Activated CD4-positive, alpha-beta T cell treated with anti-CD3 and anti-CD28 coated beads, Interleukin-2, amount 10 ng/mL, durations not matched to agents 24 days and 14 days (primary cell): ENCODE measurements at regions of chr5 and their contacts with region 1.

Region 1: GRCh38 chr5:174935854-174936474 is 211.6 kb downstream of the MSX2 start:
- DNase-seq: peak; percentile 74
- H3K4me3 Mint-ChIP-seq: no peak overlapping the region
- H3K27ac Mint-ChIP-seq: no peak overlapping the region
- H3K4me1 Mint-ChIP-seq: no peaks in the 10 kb centered on the region
- H3K27me3 Mint-ChIP-seq: peaks cover 8% of the 10 kb centered on the region

Region 2: DNA sequence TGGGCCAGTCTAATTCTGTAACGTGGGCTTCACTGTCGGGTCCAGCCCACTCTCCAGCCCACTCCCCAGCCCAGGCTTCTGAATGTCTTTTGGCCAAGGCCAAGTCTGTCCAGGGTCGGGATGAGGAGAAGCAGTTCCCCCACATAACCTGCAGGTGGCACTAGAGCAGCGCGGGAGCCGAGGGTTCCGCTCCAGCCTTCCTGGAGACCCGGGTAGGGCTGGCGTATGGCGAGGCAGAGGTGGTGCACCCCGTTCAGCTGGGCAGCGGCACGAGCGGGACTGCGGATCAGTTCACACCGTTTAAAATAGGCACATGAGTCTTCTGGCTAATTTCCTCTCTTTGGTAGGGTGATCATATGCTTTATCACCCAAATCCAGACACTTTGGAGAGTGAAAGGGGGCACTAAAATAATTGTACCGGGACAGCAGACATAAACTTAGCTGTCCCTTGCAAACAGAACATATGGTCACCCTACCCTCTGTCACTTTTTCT is 25.7 kb before region 1 on chr5:
- intact Hi-C with region 1: loop called (anchors 1 kb)
- DNase-seq: peak; percentile 86
- H3K4me3 Mint-ChIP-seq: no peak overlapping the region
- H3K27ac Mint-ChIP-seq: no peak overlapping the region
- H3K4me1 Mint-ChIP-seq: no peaks in the 10 kb centered on the region
- H3K27me3 Mint-ChIP-seq: peaks cover 24% of the 10 kb centered on the region

Region 3: DNA sequence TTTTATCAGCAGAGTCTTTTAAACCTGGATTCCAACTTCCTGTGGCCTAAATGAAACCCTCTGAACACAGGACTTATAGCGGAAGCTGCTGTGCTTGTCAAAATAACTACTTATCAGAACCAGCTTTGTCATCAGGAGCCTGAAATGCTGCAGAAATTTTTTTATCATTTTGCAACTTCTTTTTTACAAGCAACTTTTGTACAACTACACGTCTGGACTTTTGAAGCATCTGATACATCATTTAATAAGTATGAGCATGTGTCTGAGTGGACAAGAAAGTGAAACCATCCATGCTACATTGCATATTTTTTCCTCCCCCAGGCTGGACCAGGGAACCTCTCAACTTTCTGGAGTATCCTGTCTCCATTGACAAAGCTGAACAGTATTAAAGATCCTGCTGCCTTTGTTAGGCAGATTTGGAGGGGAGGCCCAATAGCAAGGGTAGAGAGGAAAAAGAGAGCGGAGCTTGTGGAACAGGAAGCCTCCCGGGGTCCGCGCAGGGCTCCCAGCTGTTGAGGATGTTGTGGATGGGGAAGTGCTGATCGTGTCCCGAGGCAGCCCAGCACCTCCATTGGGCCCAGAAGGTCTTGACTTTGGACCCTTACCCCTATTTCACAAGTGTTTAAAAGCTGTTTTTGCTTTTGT is 14.9 kb before region 1 on chr5:
- intact Hi-C with region 1: no loop called
- DNase-seq: no peak
- H3K4me3 Mint-ChIP-seq: no peak overlapping the region
- H3K27ac Mint-ChIP-seq: no peak overlapping the region
- H3K4me1 Mint-ChIP-seq: no peaks in the 10 kb centered on the region
- H3K27me3 Mint-ChIP-seq: peaks cover 7% of the 10 kb centered on the region